Thyroid gland (tissue), 4 donors: ENCODE measurements at regions of chr12 and their contacts with region 1.

Region 1: GRCh38 chr12:111024205-111024801 is 103.9 kb upstream of the MYL2 start:
- DNase-seq: peak; percentile 53 to 73
- H3K4me3 ChIP-seq: no peak overlapping the region
- H3K27ac ChIP-seq: no peak overlapping the region
- H3K4me1 ChIP-seq: no peaks in the 10 kb centered on the region
- H3K27me3 ChIP-seq: no peaks in the 10 kb centered on the region
- CTCF ChIP-seq: peak; percentile 20 to 90 (median 75)
- POLR2A ChIP-seq: no peak

Region 2: GRCh38 chr12:110888256-110888991 is 135.9 kb before region 1 on chr12:
- intact Hi-C with region 1: no loop called
- DNase-seq: no peak
- H3K4me3 ChIP-seq: no peak overlapping the region
- H3K27ac ChIP-seq: no peak overlapping the region
- H3K4me1 ChIP-seq: no peaks in the 10 kb centered on the region
- H3K27me3 ChIP-seq: no peaks in the 10 kb centered on the region
- CTCF ChIP-seq: no peak
- POLR2A ChIP-seq: no peak

Region 3: GRCh38 chr12:110937104-110937641 is 87.1 kb before region 1 on chr12:
- intact Hi-C with region 1: no loop called
- DNase-seq: peak; percentile 24 to 54
- H3K4me3 ChIP-seq: no peak overlapping the region
- H3K27ac ChIP-seq: no peak overlapping the region
- H3K4me1 ChIP-seq: peaks cover 0 to 5% of the 10 kb centered on the region in 2 donors
- H3K27me3 ChIP-seq: no peaks in the 10 kb centered on the region
- CTCF ChIP-seq: peak; percentile 69 to 93 (median 78)
- POLR2A ChIP-seq: no peak

Region 4: GRCh38 chr12:111298582-111299436 is 274.5 kb after region 1 on chr12:
- intact Hi-C with region 1: loop called (anchors 5 kb)
- DNase-seq: peak; percentile 44 to 67
- H3K4me3 ChIP-seq: no peak overlapping the region
- H3K27ac ChIP-seq: no peak overlapping the region
- H3K4me1 ChIP-seq: no peaks in the 10 kb centered on the region
- H3K27me3 ChIP-seq: no peaks in the 10 kb centered on the region
- CTCF ChIP-seq: peak; percentile 25 to 74 (median 62)
- POLR2A ChIP-seq: no peak